Naive thymus-derived CD4-positive, alpha-beta T cell (primary cell): ENCODE measurements at regions of chr6 and their contacts with region 1.

Region 1: DNA sequence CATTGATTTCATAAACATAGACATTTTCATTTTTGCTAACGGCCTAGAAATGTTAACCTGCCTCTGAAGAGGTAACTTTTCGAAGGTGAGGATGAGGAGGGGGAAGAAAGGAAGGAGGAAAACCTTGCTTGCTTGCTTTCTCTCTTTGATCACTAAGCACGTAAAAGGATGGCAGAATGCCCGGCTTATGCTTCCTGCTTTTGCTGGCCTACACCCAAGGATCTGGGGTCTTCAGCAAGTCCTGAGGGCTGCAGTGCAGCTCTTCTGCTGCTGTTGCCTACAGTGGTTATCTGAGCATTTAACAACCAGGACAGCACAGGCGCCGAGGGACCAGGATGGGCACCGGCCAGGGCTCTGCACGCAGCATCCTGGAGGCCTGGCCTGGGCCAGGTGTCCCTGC is 150.8 kb upstream of the TAB2 start:
- DNase-seq: peak in 2 of 9 donors; percentile 19 to 20
- ATAC-seq: no peak
- H3K4me3 ChIP-seq: no peak overlapping the region
- H3K4me3 Mint-ChIP-seq: peak overlapping the region; percentile 27 to 76 (median 59)
- H3K27ac ChIP-seq: peak overlapping the region; percentile 43
- H3K27ac Mint-ChIP-seq: peak overlapping the region; percentile 35 to 91 (median 65)
- H3K4me1 ChIP-seq: peaks cover 12 to 26% of the 10 kb centered on the region in 2 donors
- H3K4me1 Mint-ChIP-seq: peaks cover 18 to 58% (median 34%) of the 10 kb centered on the region in 7 donors
- H3K27me3 ChIP-seq: no peaks in the 10 kb centered on the region
- H3K27me3 Mint-ChIP-seq: no peaks in the 10 kb centered on the region

Region 2: DNA sequence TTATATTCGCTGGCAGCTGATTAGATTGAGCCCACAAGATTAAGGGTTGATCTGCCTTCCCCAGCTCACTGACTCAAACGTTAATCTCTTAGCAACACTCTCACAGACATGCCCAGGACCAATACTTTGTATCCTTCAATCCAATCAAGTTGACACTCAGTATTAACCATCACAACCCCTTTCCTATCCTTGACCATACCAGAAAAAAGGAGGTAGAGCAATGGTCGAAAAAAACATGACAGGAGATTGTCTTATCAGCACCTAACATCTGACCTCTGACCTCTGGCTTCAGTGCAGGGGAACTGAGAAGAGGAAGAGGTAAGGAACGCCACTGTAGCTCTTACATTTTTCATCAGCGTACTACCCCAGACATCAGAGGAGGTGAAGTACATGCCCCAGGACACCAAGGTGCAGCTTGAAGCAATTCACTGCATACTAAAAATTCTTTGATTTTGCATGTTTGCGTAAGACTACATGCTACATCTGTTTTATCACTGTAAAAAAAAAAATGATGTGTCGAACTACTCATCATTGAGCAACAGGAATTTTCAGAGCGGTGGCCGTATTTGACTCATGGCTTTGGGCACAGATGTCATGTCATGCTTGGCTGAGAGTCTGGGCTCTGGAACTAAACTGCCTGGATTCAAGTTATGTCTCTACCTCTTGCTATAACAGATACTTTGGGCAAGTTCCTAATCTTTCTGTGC is 37.2 kb before region 1 on chr6:
- CTCF ChIA-PET with region 1: no interaction called
- POLR2A ChIA-PET with region 1: no interaction called
- intact Hi-C with region 1: no loop called
- DNase-seq: no peak
- ATAC-seq: peak; percentile 62
- H3K4me3 ChIP-seq: no peak overlapping the region
- H3K4me3 Mint-ChIP-seq: peak overlapping the region in 6 of 10 donors; percentile 2 to 66 (median 30)
- H3K27ac ChIP-seq: peak overlapping the region; percentile 45
- H3K27ac Mint-ChIP-seq: peak overlapping the region; percentile 76 to 99 (median 91)
- H3K4me1 ChIP-seq: peaks cover 28 to 47% of the 10 kb centered on the region in 2 donors
- H3K4me1 Mint-ChIP-seq: peaks cover 40 to 83% (median 79%) of the 10 kb centered on the region in 7 donors
- H3K27me3 ChIP-seq: no peaks in the 10 kb centered on the region
- H3K27me3 Mint-ChIP-seq: no peaks in the 10 kb centered on the region

Region 3: DNA sequence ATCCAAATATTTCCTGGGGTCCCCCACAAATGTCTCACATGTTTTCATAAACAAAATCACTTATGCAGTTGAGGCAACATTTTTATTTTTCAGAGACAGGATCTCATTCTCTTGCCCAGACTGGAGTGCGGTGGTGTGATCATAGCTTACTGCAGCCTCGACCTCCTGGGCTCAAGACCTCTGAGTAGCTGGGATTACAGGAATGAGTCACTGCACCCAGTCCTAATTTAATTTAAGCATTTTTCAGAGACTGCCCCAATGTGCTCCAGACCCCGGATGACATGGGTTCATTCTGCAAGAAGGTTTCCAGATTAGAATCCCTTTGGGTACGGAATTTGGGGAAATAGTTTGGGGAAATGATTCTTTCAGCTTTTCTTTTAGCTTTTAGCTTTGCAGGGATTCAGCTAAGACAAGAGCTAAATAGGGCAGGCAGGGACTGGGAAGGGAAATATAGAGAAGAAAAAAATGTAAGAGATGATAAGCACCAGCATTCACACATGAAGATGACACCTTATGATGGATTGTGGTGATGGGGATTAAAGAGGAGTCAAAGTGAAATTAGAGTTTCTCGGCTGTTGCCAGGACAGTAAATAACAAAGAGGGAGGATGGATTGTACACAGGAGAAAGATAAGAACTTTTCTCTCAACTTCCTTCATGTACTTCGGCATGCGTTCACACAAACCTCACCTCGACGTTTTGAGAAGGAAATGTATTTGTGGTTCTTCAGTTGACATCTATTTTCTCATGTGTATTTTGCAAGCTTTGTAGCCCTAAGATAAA is 18.6 kb before region 1 on chr6:
- CTCF ChIA-PET with region 1: no interaction called
- POLR2A ChIA-PET with region 1: interaction called, 3 read pairs
- intact Hi-C with region 1: loop called in 1 of 2 experiments (anchors 2 kb)
- DNase-seq: peak in 7 of 9 donors; percentile 31 to 82 (median 56)
- ATAC-seq: peak; percentile 91
- H3K4me3 ChIP-seq: no peak overlapping the region
- H3K4me3 Mint-ChIP-seq: peak overlapping the region in 7 of 10 donors; percentile 7 to 69 (median 54)
- H3K27ac ChIP-seq: peak overlapping the region; percentile 64
- H3K27ac Mint-ChIP-seq: peak overlapping the region; percentile 80 to 97 (median 85)
- H3K4me1 ChIP-seq: peaks cover 26 to 29% of the 10 kb centered on the region in 2 donors
- H3K4me1 Mint-ChIP-seq: peaks cover 35 to 88% (median 55%) of the 10 kb centered on the region in 7 donors
- H3K27me3 ChIP-seq: no peaks in the 10 kb centered on the region
- H3K27me3 Mint-ChIP-seq: no peaks in the 10 kb centered on the region

Region 4: DNA sequence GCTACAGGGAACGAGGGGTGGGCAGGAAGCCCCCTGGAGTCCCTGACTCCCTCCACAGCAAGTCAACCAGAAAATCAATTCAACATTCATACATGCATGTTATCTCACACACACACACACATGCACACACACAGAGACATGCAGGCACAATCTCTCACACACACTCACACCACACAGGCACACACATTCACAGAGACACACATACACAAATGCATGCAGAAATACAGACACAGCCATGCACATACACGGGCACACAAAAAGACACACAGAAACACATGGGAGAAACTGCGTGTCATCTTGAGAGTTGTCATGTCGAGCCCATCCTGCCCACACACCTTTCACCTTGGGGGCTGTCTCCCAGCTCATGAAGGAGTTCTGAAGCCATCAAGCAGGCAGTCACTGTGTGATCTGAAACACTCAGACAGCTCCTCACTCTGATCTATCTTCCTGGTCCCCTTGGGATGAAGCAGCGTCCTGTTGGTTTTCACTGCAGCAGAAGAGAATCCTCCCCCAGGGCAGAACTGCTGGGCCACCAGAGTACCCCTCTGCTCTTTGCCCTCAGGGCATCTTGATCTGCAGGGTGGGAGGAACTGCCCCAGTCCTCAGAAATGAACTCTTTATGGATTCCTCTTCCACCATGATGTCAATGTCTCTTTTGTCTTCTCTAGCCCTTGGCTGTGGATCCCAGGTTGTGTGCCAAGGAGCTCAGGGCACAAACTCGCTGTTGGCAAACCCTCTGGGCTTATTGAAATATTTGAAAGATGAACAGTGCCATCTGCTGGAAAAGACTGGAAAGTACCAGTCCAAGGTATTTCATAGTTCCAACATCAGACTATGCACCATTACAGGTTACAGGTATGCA is 849.8 kb after region 1 on chr6:
- CTCF ChIA-PET with region 1: no interaction called
- POLR2A ChIA-PET with region 1: no interaction called
- intact Hi-C with region 1: no loop called
- DNase-seq: peak in 8 of 9 donors; percentile 38 to 77 (median 68)
- ATAC-seq: peak; percentile 85
- H3K4me3 ChIP-seq: no peak overlapping the region
- H3K4me3 Mint-ChIP-seq: no peak overlapping the region
- H3K27ac ChIP-seq: no peak overlapping the region
- H3K27ac Mint-ChIP-seq: peak overlapping the region in 1 of 9 donors; percentile 1
- H3K4me1 ChIP-seq: peaks cover 0 to 2% of the 10 kb centered on the region in 2 donors
- H3K4me1 Mint-ChIP-seq: peaks cover 10 to 23% (median 15%) of the 10 kb centered on the region in 7 donors
- H3K27me3 ChIP-seq: peaks cover 11 to 16% of the 10 kb centered on the region in 2 donors
- H3K27me3 Mint-ChIP-seq: peaks cover 60 to 80% (median 66%) of the 10 kb centered on the region in 5 donors